ENCODE measurements at regions of chr7 and their contacts with region 1.

Region 1: DNA sequence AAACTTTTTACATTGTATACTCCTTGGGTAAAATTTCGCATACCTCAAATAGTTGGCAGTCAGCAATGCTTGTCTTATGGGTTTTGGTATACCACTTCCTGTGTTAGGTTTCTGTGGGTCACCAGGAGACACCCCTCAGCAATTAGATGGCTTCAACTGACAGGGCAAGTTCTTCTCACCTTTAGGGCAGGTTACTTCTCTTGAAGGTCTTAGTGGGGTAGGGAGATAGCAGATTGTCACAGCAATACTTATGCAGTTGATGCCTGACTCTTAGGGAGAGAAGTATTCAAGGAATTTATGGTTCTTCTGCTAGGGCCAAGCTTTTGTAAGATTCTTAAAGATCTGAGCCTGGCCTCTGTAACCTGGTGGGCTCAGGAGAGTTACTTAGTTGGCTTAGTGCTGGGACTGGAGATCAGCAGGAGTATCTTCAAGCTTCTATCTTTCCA is 42.9 kb downstream of the MKLN1 start:
- DNase-seq: peak in 7 of 9 donors; percentile 8 to 44 (median 22)
- ATAC-seq: peak; percentile 77
- H3K4me3 ChIP-seq: no peak overlapping the region
- H3K4me3 Mint-ChIP-seq: peak overlapping the region in 9 of 10 donors; percentile 15 to 69 (median 46)
- H3K27ac ChIP-seq: no peak overlapping the region
- H3K27ac Mint-ChIP-seq: peak overlapping the region in 3 of 9 donors; percentile 7 to 23 (median 14)
- H3K4me1 ChIP-seq: peaks cover 11 to 20% of the 10 kb centered on the region in 2 donors
- H3K4me1 Mint-ChIP-seq: peaks cover 42 to 95% (median 79%) of the 10 kb centered on the region in 7 donors
- H3K27me3 ChIP-seq: no peaks in the 10 kb centered on the region
- H3K27me3 Mint-ChIP-seq: no peaks in the 10 kb centered on the region

Region 2: DNA sequence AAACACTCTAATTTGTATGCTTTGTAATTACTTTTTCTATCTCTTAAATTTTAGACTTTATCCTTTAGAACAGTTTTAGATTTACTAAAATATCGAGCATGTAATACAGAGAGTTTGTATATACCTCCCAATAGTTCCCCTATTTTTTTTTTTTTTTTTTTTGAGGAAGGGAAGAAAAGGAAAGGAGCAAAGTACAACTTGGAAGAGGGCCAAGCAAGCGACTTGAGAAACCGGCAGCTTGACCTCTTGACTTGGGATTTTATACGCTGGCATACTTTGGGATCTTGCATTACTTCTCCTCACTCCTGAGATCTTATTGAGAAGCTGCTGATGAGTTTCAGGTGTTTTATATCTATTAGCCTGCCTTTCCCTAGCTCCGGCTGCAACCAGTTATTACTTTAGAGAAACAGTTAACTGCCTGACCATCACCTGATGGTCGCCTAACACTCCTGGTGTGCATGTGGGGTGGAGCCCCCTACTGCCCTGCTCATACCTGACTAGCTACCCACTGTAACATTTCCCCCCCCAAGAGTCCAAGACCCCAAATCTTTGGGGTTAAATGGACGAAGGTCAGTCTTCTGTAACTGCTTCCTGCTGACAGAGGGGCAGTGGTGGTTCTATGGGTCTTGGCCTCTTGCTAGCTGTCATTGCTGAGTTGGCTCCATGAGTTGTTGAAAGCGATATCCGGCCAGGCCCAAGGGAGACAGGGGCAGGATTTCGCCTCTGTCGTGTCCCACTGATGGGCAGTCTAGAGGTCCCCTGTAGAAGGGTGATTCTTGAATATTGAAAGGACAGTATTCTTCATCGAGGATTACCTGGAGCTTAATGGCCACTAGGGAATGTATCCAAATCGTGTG is 14.4 kb before region 1 on chr7:
- CTCF ChIA-PET with region 1: interaction called, 3 read pairs
- POLR2A ChIA-PET with region 1: interaction called, 3 read pairs
- intact Hi-C with region 1: loop called in 1 of 2 experiments (anchors 1 kb)
- DNase-seq: no peak
- ATAC-seq: no peak
- H3K4me3 ChIP-seq: no peak overlapping the region
- H3K4me3 Mint-ChIP-seq: peak overlapping the region in 3 of 10 donors; percentile 14 to 50 (median 38)
- H3K27ac ChIP-seq: no peak overlapping the region
- H3K27ac Mint-ChIP-seq: no peak overlapping the region
- H3K4me1 ChIP-seq: peaks cover 20 to 40% of the 10 kb centered on the region in 2 donors
- H3K4me1 Mint-ChIP-seq: peaks cover 49 to 98% (median 83%) of the 10 kb centered on the region in 7 donors
- H3K27me3 ChIP-seq: no peaks in the 10 kb centered on the region
- H3K27me3 Mint-ChIP-seq: no peaks in the 10 kb centered on the region

Region 3: GRCh38 chr7:131383417-131384285 is 13.1 kb after region 1 on chr7:
- CTCF ChIA-PET with region 1: interaction called, 3 read pairs
- POLR2A ChIA-PET with region 1: no interaction called
- intact Hi-C with region 1: loop called in 1 of 2 experiments (anchors 2 kb)
- DNase-seq: peak in 3 of 9 donors; percentile 1 to 6 (median 4)
- ATAC-seq: no peak
- H3K4me3 ChIP-seq: no peak overlapping the region
- H3K4me3 Mint-ChIP-seq: peak overlapping the region in 4 of 10 donors; percentile 1 to 9 (median 2)
- H3K27ac ChIP-seq: no peak overlapping the region
- H3K27ac Mint-ChIP-seq: peak overlapping the region in 5 of 9 donors; percentile 1 to 44 (median 8)
- H3K4me1 ChIP-seq: peaks cover 0 to 8% of the 10 kb centered on the region in 2 donors
- H3K4me1 Mint-ChIP-seq: peaks cover 12 to 72% (median 46%) of the 10 kb centered on the region in 7 donors
- H3K27me3 ChIP-seq: no peaks in the 10 kb centered on the region
- H3K27me3 Mint-ChIP-seq: no peaks in the 10 kb centered on the region

Region 4: GRCh38 chr7:131436384-131436783 is 65.8 kb after region 1 on chr7:
- CTCF ChIA-PET with region 1: no interaction called
- POLR2A ChIA-PET with region 1: no interaction called
- intact Hi-C with region 1: no loop called
- DNase-seq: no peak
- ATAC-seq: no peak
- H3K4me3 ChIP-seq: no peak overlapping the region
- H3K4me3 Mint-ChIP-seq: no peak overlapping the region
- H3K27ac ChIP-seq: no peak overlapping the region
- H3K27ac Mint-ChIP-seq: no peak overlapping the region
- H3K4me1 ChIP-seq: no peaks in the 10 kb centered on the region
- H3K4me1 Mint-ChIP-seq: peaks cover 0 to 25% (median 11%) of the 10 kb centered on the region in 7 donors
- H3K27me3 ChIP-seq: no peaks in the 10 kb centered on the region
- H3K27me3 Mint-ChIP-seq: no peaks in the 10 kb centered on the region